ENCODE measurements at regions of chr6 and their contacts with region 1.

Region 1: GRCh38 chr6:16403831-16404230 is 165.4 kb downstream of the GMPR start:
- DNase-seq: no peak
- ATAC-seq: no peak
- H3K4me3 ChIP-seq: no peak overlapping the region
- H3K27ac ChIP-seq: no peak overlapping the region
- H3K4me1 ChIP-seq: peaks cover 15 to 16% of the 10 kb centered on the region in 2 donors
- H3K27me3 ChIP-seq: no peaks in the 10 kb centered on the region

Region 2: DNA sequence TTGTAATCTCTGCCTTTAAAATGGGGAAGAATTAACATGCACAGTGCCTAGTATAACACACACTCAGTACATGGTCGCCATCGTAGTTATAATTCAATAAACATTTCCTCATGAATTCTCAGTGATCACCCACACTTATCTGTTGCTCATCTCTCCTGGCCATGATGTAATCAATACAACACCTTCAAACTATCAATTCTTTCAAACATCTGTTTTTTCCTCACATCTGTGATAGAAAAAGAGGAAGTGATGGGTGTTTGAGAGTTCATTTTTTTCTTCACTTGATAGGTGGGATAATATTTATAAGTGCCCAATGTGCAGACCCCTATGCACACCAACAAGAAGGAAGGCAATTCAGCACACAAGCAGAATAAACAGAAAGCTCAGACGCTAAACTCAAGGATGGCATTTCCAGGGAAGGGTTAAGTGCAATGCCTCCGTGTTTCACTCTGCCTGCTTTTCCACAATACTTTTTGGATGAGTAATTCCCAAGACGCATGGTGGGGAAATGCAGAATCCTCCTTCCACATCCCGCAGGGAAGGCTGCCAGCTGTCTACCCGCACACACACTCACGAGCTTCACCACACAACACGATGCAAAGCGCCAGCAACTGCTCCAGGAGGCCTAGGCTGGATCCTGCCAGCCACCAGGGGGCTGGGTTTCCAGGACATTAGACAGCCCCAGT is 65.1 kb before region 1 on chr6:
- intact Hi-C with region 1: loop called (anchors 2 to 5 kb)
- DNase-seq: peak; percentile 85 to 89
- ATAC-seq: no peak
- H3K4me3 ChIP-seq: no peak overlapping the region
- H3K27ac ChIP-seq: no peak overlapping the region
- H3K4me1 ChIP-seq: peaks cover 0 to 6% of the 10 kb centered on the region in 2 donors
- H3K27me3 ChIP-seq: no peaks in the 10 kb centered on the region

Region 3: DNA sequence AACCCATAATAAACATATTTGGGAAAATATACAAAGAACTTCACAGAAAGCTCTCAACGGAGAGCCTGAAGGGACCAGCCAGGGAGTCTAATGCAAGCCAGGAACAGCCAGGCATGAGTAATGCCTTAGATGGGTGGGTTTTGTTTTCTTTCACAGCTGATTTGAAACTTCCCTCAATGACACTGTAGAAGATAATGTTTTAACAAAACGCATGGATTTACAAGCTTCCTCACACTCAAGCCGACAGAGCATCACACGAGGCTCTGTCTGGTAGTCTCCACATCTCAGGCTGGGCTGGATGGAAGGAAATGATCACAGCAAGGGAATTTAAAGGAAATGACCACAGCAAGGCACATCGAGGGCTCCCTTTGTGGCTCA is 51.6 kb before region 1 on chr6:
- intact Hi-C with region 1: loop called in 1 of 2 experiments (anchors 5 kb)
- DNase-seq: no peak
- ATAC-seq: peak; percentile 80
- H3K4me3 ChIP-seq: peak overlapping the region in 1 of 2 donors; percentile 50
- H3K27ac ChIP-seq: peak overlapping the region; percentile 44 to 92
- H3K4me1 ChIP-seq: peaks cover 0 to 2% of the 10 kb centered on the region in 2 donors
- H3K27me3 ChIP-seq: no peaks in the 10 kb centered on the region